ENCODE measurements at regions of chr13 and their contacts with region 1.

Region 1: GRCh38 chr13:32255724-32256109 is 59.4 kb downstream of the ZAR1L start:
- DNase-seq: no peak
- ATAC-seq: no peak
- H3K4me3 Mint-ChIP-seq: no peak overlapping the region
- H3K27ac Mint-ChIP-seq: no peak overlapping the region
- H3K4me1 Mint-ChIP-seq: no peaks in the 10 kb centered on the region
- H3K27me3 Mint-ChIP-seq: peaks cover 15% of the 10 kb centered on the region

Region 2: DNA sequence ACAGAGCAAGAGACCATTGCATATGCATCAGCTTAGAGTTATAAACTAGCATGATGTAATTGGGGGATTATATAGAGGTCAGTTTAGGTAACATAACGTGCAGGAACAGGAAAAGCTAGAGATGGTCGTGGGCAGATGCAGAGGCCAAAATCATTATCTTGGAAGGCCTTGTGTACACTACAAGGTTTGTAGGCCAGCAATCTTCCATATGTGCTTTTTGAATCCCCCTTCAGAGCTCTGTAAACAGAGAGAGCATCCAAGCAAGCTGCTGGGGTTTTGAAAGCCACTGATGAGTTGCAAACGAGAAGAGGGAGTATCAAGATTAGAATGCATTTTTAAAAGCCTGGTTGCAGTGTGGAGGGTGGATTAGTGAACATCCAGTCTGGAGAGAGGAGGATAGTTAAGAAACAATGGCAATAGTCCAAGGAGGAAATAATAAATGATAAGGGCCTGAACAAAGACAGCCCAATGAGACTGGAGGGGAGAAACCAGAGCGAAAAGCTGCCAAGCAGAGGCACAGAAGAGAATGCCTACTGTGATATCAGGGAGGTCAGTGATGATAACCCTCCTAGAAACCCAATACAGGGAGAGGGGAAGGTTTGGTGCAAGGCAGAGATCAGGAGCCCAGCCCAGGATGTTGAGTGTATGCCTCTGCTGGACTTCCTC is 50.2 kb before region 1 on chr13:
- CTCF ChIA-PET with region 1: no interaction called
- POLR2A ChIA-PET with region 1: no interaction called
- DNase-seq: no peak
- ATAC-seq: no peak
- H3K4me3 Mint-ChIP-seq: no peak overlapping the region
- H3K27ac Mint-ChIP-seq: no peak overlapping the region
- H3K4me1 Mint-ChIP-seq: no peaks in the 10 kb centered on the region
- H3K27me3 Mint-ChIP-seq: peaks cover 11% of the 10 kb centered on the region

Region 3: DNA sequence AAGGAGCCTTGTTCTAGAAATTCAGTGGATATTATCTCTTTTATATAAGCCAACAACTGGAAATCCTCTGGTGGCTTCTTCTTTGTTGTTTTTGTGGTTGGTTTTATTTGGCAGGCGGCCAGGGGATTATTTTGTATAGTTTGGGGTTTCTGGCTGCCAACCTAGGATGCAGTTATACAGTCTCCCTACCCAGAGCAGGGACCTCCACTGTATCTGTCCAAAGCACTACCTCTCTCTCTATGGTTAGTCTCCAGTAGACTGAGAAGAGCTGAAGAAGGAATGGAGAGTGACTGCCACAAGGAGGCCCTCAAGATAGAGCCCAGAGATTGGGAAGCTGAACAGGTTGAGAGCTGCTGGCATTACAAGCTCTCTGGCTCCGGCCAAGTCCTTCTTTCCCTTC is 20.8 kb before region 1 on chr13:
- CTCF ChIA-PET with region 1: no interaction called
- POLR2A ChIA-PET with region 1: no interaction called
- DNase-seq: no peak
- ATAC-seq: no peak
- H3K4me3 Mint-ChIP-seq: no peak overlapping the region
- H3K27ac Mint-ChIP-seq: no peak overlapping the region
- H3K4me1 Mint-ChIP-seq: peaks cover 3% of the 10 kb centered on the region
- H3K27me3 Mint-ChIP-seq: no peaks in the 10 kb centered on the region

Region 4: DNA sequence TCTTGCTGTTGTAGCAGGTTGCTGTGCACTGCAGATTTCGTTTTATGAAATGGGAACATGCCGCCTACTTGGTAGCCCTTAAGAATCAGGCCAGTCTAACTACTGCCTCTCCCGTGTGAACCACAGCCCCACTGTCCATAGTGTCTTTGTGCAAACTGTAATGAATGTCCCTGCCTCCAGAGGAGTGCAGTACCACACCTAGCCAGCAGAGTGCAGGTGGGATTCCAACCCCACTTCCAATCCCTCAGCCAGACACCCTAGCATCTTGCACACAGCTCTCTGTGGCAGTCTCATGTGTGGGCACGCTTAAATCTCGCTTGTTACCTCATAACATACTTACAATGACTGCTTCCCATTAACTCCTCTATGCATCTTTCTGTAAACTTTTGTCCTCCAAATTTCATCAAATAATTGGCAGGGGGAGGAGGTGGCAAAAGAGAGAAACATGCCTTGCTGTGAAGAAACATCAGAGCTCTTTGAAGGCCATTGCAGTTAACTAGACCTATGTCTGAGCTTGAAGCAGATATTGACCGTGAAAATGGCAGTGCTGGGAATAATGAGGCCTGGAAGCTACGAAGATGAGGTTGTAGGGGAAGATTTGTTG is 12.2 kb after region 1 on chr13:
- CTCF ChIA-PET with region 1: interaction called, 14 read pairs
- POLR2A ChIA-PET with region 1: no interaction called
- DNase-seq: peak; percentile 65
- ATAC-seq: peak; percentile 92
- H3K4me3 Mint-ChIP-seq: no peak overlapping the region
- H3K27ac Mint-ChIP-seq: no peak overlapping the region
- H3K4me1 Mint-ChIP-seq: no peaks in the 10 kb centered on the region
- H3K27me3 Mint-ChIP-seq: no peaks in the 10 kb centered on the region